Activated CD8-positive, alpha-beta T cell treated with anti-CD3 and anti-CD28 coated beads, Interleukin-2, amount 10 ng/mL, durations not matched to agents 7 days and 5 days (primary cell): ENCODE measurements at regions of chr3 and their contacts with region 1.

Region 1: DNA sequence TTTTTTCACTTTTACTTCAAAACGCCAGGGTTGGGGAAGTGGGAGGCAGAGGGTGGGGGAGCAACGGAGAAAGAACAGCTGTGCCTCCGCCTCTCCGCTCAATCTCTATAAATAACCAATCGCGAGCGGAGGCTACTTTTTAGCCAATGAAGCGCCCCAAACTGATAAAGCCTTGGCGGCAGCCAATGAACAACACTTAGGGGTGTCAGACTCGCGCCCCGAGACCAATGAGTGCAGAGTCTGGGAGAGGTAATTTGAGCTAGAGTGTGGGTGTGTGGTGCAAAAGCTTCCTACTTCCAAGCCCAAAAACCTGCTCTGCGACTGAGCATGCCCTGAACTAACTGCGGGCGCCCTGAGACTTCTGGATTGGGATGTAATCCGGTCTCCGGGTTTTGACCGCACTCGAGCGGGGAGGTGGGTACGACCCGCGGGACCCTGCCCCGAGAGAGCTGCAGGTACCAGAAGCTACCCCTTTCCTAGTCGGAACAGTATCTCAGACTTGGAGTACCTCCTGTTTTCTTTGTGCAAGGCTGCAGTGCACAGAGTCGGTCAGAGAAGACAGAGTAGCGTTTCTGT is 800 bp upstream of the RAP2B start:
- DNase-seq: peak; percentile 96
- ATAC-seq: peak; percentile 85
- H3K4me3 Mint-ChIP-seq: peak overlapping the region; percentile 88
- H3K27ac Mint-ChIP-seq: peak overlapping the region; percentile 97
- H3K4me1 Mint-ChIP-seq: peaks cover 38% of the 10 kb centered on the region
- H3K27me3 Mint-ChIP-seq: no peaks in the 10 kb centered on the region

Region 2: GRCh38 chr3:153069598-153070510 is 91.4 kb before region 1 on chr3:
- CTCF ChIA-PET with region 1: no interaction called
- POLR2A ChIA-PET with region 1: no interaction called
- DNase-seq: no peak
- ATAC-seq: no peak
- H3K4me3 Mint-ChIP-seq: no peak overlapping the region
- H3K27ac Mint-ChIP-seq: no peak overlapping the region
- H3K4me1 Mint-ChIP-seq: no peaks in the 10 kb centered on the region
- H3K27me3 Mint-ChIP-seq: peaks cover 2% of the 10 kb centered on the region

Region 3: DNA sequence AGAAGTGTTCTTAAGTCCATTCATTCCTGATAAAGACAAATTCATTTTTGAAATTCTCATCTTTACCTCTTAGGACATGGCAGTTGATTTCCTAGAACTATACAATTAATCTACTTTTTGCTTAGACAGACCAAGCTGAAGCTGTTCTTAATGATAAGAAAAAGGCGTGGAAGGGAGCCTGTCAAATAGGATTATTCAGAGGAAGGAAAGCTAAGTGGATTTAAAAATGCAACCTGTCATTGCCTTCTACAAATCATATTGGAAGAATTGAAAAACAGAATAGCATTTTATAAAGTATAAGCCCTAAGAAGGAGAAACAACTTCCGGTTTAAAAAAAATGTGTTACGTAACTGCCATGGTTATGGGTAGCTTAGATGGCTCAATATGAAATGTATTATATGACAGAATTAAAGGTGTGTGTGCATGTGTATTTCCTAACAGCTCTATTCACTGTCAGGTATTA is 80.4 kb before region 1 on chr3:
- CTCF ChIA-PET with region 1: no interaction called
- POLR2A ChIA-PET with region 1: no interaction called
- DNase-seq: no peak
- ATAC-seq: no peak
- H3K4me3 Mint-ChIP-seq: no peak overlapping the region
- H3K27ac Mint-ChIP-seq: no peak overlapping the region
- H3K4me1 Mint-ChIP-seq: no peaks in the 10 kb centered on the region
- H3K27me3 Mint-ChIP-seq: no peaks in the 10 kb centered on the region

Region 4: DNA sequence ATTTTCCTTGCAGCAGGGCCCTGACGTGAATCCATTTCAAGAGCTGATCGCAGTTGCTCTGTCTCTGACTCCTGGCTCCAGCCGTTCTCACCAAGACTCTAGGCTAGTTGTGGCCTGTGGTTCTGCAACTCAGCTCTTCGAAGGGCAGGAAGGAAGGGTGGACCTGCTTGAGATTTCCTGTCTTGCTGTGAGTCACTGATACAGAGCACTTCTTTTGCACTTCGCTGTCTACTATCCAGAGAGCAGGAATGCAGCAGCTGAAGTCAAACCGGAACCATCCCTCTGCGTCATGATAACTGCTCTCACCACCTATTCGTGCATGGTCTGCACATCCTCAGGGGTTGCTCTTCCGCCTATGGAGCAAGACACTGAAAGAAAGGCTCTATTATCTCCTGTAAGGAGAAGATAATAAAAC is 60.5 kb after region 1 on chr3:
- CTCF ChIA-PET with region 1: interaction called, 14 read pairs
- POLR2A ChIA-PET with region 1: interaction called, 13 read pairs
- DNase-seq: peak; percentile 87
- ATAC-seq: peak; percentile 99
- H3K4me3 Mint-ChIP-seq: peak overlapping the region; percentile 60
- H3K27ac Mint-ChIP-seq: peak overlapping the region; percentile 91
- H3K4me1 Mint-ChIP-seq: peaks cover 53% of the 10 kb centered on the region
- H3K27me3 Mint-ChIP-seq: no peaks in the 10 kb centered on the region

Region 5: GRCh38 chr3:153291056-153291685 is 129.9 kb after region 1 on chr3:
- CTCF ChIA-PET with region 1: interaction called, 23 read pairs
- POLR2A ChIA-PET with region 1: interaction called, 5 read pairs
- DNase-seq: no peak
- ATAC-seq: peak; percentile 44
- H3K4me3 Mint-ChIP-seq: no peak overlapping the region
- H3K27ac Mint-ChIP-seq: no peak overlapping the region
- H3K4me1 Mint-ChIP-seq: peaks cover 30% of the 10 kb centered on the region
- H3K27me3 Mint-ChIP-seq: no peaks in the 10 kb centered on the region